ENCODE measurements at regions of chr3 and their contacts with region 1.

Region 1: GRCh38 chr3:81477740-81478139 is 283.7 kb downstream of the GBE1 start:
- DNase-seq: no peak
- ATAC-seq: no peak
- H3K4me3 Mint-ChIP-seq: no peak overlapping the region
- H3K27ac Mint-ChIP-seq: no peak overlapping the region
- H3K4me1 Mint-ChIP-seq: no peaks in the 10 kb centered on the region
- H3K27me3 Mint-ChIP-seq: no peaks in the 10 kb centered on the region

Region 2: GRCh38 chr3:81490541-81491288 is 13.0 kb after region 1 on chr3:
- CTCF ChIA-PET with region 1: interaction called, 13 read pairs
- DNase-seq: peak; percentile 84
- ATAC-seq: peak; percentile 86
- H3K4me3 Mint-ChIP-seq: no peak overlapping the region
- H3K27ac Mint-ChIP-seq: no peak overlapping the region
- H3K4me1 Mint-ChIP-seq: no peaks in the 10 kb centered on the region
- H3K27me3 Mint-ChIP-seq: no peaks in the 10 kb centered on the region

Measured in activated CD8-positive, alpha-beta memory T cell treated with anti-CD3 and anti-CD28 coated beads, Interleukin-2, amount 10 ng/mL, durations not matched to agents 7 days and 5 days (primary cell).